IMR-90 (cell line): ENCODE measurements at regions of chr12 and their contacts with region 1.

Region 1: DNA sequence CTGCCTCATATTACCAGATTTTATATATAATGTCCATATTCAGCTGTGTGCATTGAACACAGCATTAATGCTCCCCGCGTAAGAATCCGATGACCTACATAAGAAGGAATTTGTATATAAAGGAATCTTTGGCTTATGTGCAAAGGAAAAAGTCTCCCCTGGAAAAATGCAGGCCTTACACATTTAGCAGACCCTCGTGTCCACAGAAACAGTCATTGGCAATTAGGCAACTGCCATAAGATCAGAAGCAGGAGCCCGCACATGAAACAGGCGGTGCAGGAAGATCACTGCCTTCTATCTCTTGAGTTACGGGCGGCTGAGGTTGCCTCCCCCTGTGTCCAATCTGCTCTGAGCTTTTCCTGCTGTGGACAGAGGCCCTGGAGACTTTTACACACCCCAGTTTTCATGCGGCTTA is 63.2 kb upstream of the RFX4 start:
- DNase-seq: peak; percentile 70
- ATAC-seq: peak; percentile 76
- H3K4me3 ChIP-seq: no peak overlapping the region
- H3K27ac ChIP-seq: peak overlapping the region; percentile 41; the same call in 1 of the 2 replicates
- H3K4me1 ChIP-seq: peaks cover 3% of the 10 kb centered on the region; the same call in 1 of the 2 replicates
- H3K27me3 ChIP-seq: no peaks in the 10 kb centered on the region
- CTCF ChIP-seq: no peak
- POLR2A ChIP-seq: no peak
- RAD21 ChIP-seq: no peak

Region 2: GRCh38 chr12:106126441-106127337 is 392.9 kb before region 1 on chr12:
- CTCF ChIA-PET with region 1: no interaction called
- POLR2A ChIA-PET with region 1: no interaction called
- dilution Hi-C with region 1: no loop called
- in situ Hi-C with region 1: no loop called
- intact Hi-C with region 1: no loop called
- DNase-seq: peak; percentile 80
- ATAC-seq: peak; percentile 83
- H3K4me3 ChIP-seq: no peak overlapping the region
- H3K27ac ChIP-seq: peak overlapping the region; percentile 41
- H3K4me1 ChIP-seq: peaks cover 12% of the 10 kb centered on the region
- H3K27me3 ChIP-seq: no peaks in the 10 kb centered on the region
- CTCF ChIP-seq: no peak
- POLR2A ChIP-seq: no peak
- RAD21 ChIP-seq: no peak

Region 3: GRCh38 chr12:106841510-106842302 is 322.1 kb after region 1 on chr12:
- CTCF ChIA-PET with region 1: no interaction called
- POLR2A ChIA-PET with region 1: no interaction called
- dilution Hi-C with region 1: no loop called
- in situ Hi-C with region 1: no loop called
- intact Hi-C with region 1: loop called (anchors 5 kb)
- DNase-seq: peak; percentile 45
- ATAC-seq: peak; percentile 65
- H3K4me3 ChIP-seq: no peak overlapping the region
- H3K27ac ChIP-seq: no peak overlapping the region
- H3K4me1 ChIP-seq: peaks cover 5% of the 10 kb centered on the region
- H3K27me3 ChIP-seq: no peaks in the 10 kb centered on the region
- CTCF ChIP-seq: peak; percentile 65
- POLR2A ChIP-seq: no peak
- RAD21 ChIP-seq: peak; percentile 72

Region 4: GRCh38 chr12:107109741-107110719 is 590.4 kb after region 1 on chr12:
- CTCF ChIA-PET with region 1: no interaction called
- POLR2A ChIA-PET with region 1: no interaction called
- dilution Hi-C with region 1: no loop called
- in situ Hi-C with region 1: no loop called
- intact Hi-C with region 1: loop called (anchors 10 kb)
- DNase-seq: no peak
- ATAC-seq: no peak
- H3K4me3 ChIP-seq: no peak overlapping the region
- H3K27ac ChIP-seq: no peak overlapping the region
- H3K4me1 ChIP-seq: no peaks in the 10 kb centered on the region
- H3K27me3 ChIP-seq: peaks cover 26% of the 10 kb centered on the region
- CTCF ChIP-seq: no peak
- POLR2A ChIP-seq: no peak
- RAD21 ChIP-seq: no peak

Region 5: GRCh38 chr12:107200394-107200793 is 680.8 kb after region 1 on chr12:
- CTCF ChIA-PET with region 1: no interaction called
- POLR2A ChIA-PET with region 1: no interaction called
- dilution Hi-C with region 1: no loop called
- in situ Hi-C with region 1: no loop called
- intact Hi-C with region 1: no loop called
- DNase-seq: peak; percentile 87
- ATAC-seq: peak; percentile 91
- H3K4me3 ChIP-seq: no peak overlapping the region
- H3K27ac ChIP-seq: no peak overlapping the region
- H3K4me1 ChIP-seq: peaks cover 5% of the 10 kb centered on the region; the same call in 1 of the 2 replicates
- H3K27me3 ChIP-seq: no peaks in the 10 kb centered on the region
- CTCF ChIP-seq: no peak
- POLR2A ChIP-seq: no peak
- RAD21 ChIP-seq: no peak